ENCODE measurements at regions of chr20 and their contacts with region 1.

Region 1: GRCh38 chr20:407133-407952 is 756 bp upstream of the RBCK1 start:
- H3K4me3 ChIP-seq: peak overlapping the region; percentile 34
- H3K27ac ChIP-seq: peak overlapping the region; percentile 76
- H3K4me1 ChIP-seq: peaks cover 6% of the 10 kb centered on the region
- CTCF ChIP-seq: peak; percentile 93

Region 2: GRCh38 chr20:381581-382290 is 25.6 kb before region 1 on chr20:
- CTCF ChIA-PET with region 1: no interaction called
- POLR2A ChIA-PET with region 1: interaction called, 20 read pairs
- H3K4me3 ChIP-seq: peak overlapping the region; percentile 60
- H3K27ac ChIP-seq: peak overlapping the region; percentile 87; the same call in 1 of the 2 replicates
- H3K4me1 ChIP-seq: peaks cover 9% of the 10 kb centered on the region; the same call in 1 of the 2 replicates
- CTCF ChIP-seq: peak; percentile 43

Measured in HEK293 (cell line).